ENCODE measurements at regions of chr3 and their contacts with region 1.

Region 1: DNA sequence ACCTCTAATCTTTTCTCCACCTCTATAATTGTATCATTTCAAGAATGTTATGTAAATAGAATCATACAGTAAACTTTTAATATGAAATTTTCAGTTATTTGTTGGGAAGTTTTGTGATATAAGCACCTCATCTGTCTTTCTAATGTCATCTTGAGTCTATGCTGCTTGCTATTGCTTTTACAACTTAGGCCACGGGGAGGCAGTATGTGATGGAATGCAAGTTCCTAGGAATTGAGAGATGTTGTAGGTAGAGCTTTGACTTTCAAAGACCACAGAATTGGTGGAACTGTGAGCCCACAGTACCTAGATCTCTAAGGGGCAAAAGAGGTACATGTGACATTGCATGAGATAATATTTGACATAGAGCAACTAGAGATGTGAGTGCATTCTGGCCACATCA is 328.3 kb downstream of the MFSD1 start:
- DNase-seq: no peak
- H3K4me3 ChIP-seq: no peak overlapping the region
- H3K27ac ChIP-seq: no peak overlapping the region
- H3K4me1 ChIP-seq: no peaks in the 10 kb centered on the region
- H3K27me3 ChIP-seq: no peaks in the 10 kb centered on the region
- CTCF ChIP-seq: peak in 1 of 3 experiments; percentile 22

Region 2: GRCh38 chr3:159234306-159234705 is 104.2 kb after region 1 on chr3:
- dilution Hi-C with region 1: loop called (anchors 25 kb)
- DNase-seq: no peak
- H3K4me3 ChIP-seq: no peak overlapping the region
- H3K27ac ChIP-seq: no peak overlapping the region
- H3K4me1 ChIP-seq: no peaks in the 10 kb centered on the region
- H3K27me3 ChIP-seq: no peaks in the 10 kb centered on the region
- CTCF ChIP-seq: no peak

Region 3: GRCh38 chr3:159559771-159560170 is 429.7 kb after region 1 on chr3:
- dilution Hi-C with region 1: no loop called
- DNase-seq: no peak
- H3K4me3 ChIP-seq: no peak overlapping the region
- H3K27ac ChIP-seq: no peak overlapping the region
- H3K4me1 ChIP-seq: no peaks in the 10 kb centered on the region
- H3K27me3 ChIP-seq: no peaks in the 10 kb centered on the region
- CTCF ChIP-seq: no peak

Measured in keratinocyte (primary cell).